Gastrocnemius medialis (tissue), 4 donors: ENCODE measurements at regions of chr3 and their contacts with region 1.

Region 1: DNA sequence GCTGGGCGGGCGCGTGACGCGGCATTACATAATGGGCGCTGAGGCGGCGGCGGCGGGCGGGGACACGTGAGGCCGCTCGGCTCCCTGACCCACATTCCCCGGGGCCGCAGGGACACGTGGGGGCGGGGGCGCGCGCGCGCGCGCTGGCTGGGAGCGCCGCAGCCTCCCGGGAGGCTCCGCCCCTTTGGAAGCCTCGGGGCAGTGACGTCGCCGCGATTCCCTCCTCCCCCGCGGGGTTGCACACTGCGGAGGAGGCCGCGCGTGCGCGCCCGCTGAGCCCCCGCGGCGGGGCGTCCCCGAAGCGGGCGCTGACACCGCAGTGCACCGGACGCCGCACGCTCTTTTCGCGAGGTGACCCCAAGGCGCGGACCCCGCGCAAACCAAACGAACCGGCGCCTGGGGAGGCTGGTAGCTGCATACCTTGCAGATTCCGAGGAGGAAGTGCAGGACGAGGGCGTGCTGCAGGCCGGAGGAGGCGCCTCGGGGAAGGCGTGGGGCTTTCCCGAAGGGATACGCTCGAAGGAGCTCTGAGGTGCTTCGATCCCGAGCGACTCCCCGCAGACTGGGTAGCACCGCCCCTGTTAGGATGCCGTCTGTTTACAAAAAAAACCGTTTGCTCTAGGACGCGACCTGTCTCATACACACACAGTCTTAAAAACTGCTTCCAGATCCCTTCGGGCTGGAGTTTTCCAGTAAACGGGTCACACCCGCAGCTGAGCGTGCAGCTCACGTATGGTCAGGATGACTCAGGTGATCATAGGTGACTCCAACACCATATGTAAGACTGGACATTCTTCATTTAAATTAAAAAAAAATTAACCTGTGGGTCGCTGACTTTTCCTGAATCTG is 1.0 kb downstream of the NR1D2 start:
- DNase-seq: peak; percentile 95 to 98
- ATAC-seq: peak; percentile 68
- H3K4me3 ChIP-seq: peak overlapping the region; percentile 67 to 91 (median 81)
- H3K27ac ChIP-seq: peak overlapping the region; percentile 90 to 99 (median 95)
- H3K4me1 ChIP-seq: peaks cover 59 to 61% of the 10 kb centered on the region in 2 donors
- H3K27me3 ChIP-seq: no peaks in the 10 kb centered on the region
- CTCF ChIP-seq: peak in 1 of 5 experiments; percentile 6
- POLR2A ChIP-seq: peak; percentile 92 to 97

Region 2: GRCh38 chr3:23202921-23203707 is 743.0 kb before region 1 on chr3 and contains the start of gene UBE2E2:
- in situ Hi-C with region 1: no loop called
- intact Hi-C with region 1: loop called (anchors 1 kb)
- DNase-seq: peak; percentile 72 to 78
- ATAC-seq: peak; percentile 75
- H3K4me3 ChIP-seq: peak within 1 kb of the TSS; percentile 67 to 84 (median 78)
- H3K27ac ChIP-seq: peak within 1 kb of the TSS; percentile 90 to 95 (median 92)
- H3K4me1 ChIP-seq: peaks cover 37 to 48% of the 10 kb centered on the region in 2 donors
- H3K27me3 ChIP-seq: no peaks in the 10 kb centered on the region
- CTCF ChIP-seq: no peak
- POLR2A ChIP-seq: peak; percentile 95 to 97
- total RNA-seq, gene UBE2E2: 7.9 to 44.7 (median 26.6) TPM

Region 3: GRCh38 chr3:23888617-23889228 is 57.4 kb before region 1 on chr3:
- in situ Hi-C with region 1: no loop called
- intact Hi-C with region 1: loop called (anchors 2 kb)
- DNase-seq: no peak
- ATAC-seq: no peak
- H3K4me3 ChIP-seq: no peak overlapping the region
- H3K27ac ChIP-seq: peak overlapping the region; percentile 22 to 62 (median 40)
- H3K4me1 ChIP-seq: peaks cover 27 to 32% of the 10 kb centered on the region in 2 donors
- H3K27me3 ChIP-seq: no peaks in the 10 kb centered on the region
- CTCF ChIP-seq: peak; percentile 68 to 93 (median 81)
- POLR2A ChIP-seq: no peak

Region 4: GRCh38 chr3:23916886-23917678 is 29.0 kb before region 1 on chr3 and contains the starts of genes NKIRAS1 and RPL15:
- in situ Hi-C with region 1: no loop called
- intact Hi-C with region 1: loop called (anchors 1 kb)
- DNase-seq: peak; percentile 97 to 98
- ATAC-seq: peak; percentile 97
- H3K4me3 ChIP-seq: peak within 1 kb of the TSS; percentile 83 to 96 (median 93)
- H3K27ac ChIP-seq: peak within 1 kb of the TSS; percentile 91 to 96 (median 92)
- H3K4me1 ChIP-seq: peaks cover 30 to 37% of the 10 kb centered on the region in 2 donors
- H3K27me3 ChIP-seq: no peaks in the 10 kb centered on the region
- CTCF ChIP-seq: peak in 4 of 5 experiments; percentile 62 to 80 (median 74)
- POLR2A ChIP-seq: peak; percentile 97 to 98
- total RNA-seq, gene NKIRAS1: 25.1 to 42.1 (median 34.7) TPM
- total RNA-seq, gene RPL15: 1,370 to 1,628 (median 1,557) TPM

Region 5: DNA sequence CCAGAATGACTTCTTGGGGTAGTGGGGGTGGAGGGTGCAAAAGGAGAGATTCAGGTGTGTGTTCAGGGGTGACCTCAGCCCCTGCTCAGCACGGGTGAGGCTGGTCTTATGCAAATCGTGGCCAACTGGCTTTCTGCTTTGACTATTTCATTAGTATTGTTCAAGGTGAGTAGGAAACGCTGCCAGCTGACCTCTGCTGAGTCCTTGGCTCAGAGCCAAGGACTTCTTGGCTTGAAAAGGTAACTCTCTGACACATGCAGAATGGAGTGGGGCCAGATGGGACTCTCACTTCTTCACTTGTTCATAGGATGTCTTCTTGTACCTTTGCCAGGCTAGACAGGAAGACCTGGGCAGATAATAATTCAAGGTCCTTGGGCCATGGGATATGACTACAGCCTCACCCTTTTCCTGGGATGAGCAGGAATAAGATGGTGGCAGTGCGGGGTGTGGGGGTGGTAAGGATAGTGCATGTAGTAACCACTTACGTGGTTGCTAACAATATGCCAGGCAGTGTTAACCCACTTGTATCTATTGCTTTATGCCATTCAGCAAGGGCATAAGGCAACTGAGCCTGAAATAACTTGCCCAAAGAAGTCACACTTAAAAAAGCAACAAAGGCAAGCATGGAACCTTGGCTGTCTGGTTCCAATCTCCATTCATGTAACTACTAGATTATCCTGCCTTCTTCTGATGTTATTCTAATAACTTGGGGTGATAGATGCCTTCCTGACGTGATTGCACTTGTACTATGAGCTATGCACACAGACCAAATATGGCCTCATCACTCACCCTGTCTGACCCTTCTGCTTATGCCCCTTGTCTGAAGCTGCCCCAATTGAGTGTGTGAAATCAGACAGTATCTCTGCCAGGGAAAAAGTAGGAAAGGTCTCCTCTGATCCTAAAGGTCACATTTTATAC is 192.1 kb after region 1 on chr3:
- in situ Hi-C with region 1: no loop called
- intact Hi-C with region 1: loop called (anchors 5 kb)
- DNase-seq: peak in 1 of 2 donors; percentile 54
- ATAC-seq: peak; percentile 20 to 66
- H3K4me3 ChIP-seq: no peak overlapping the region
- H3K27ac ChIP-seq: peak overlapping the region; percentile 64 to 77 (median 72)
- H3K4me1 ChIP-seq: peaks cover 35 to 42% of the 10 kb centered on the region in 2 donors
- H3K27me3 ChIP-seq: no peaks in the 10 kb centered on the region
- CTCF ChIP-seq: no peak
- POLR2A ChIP-seq: no peak